Heart right ventricle (tissue), 16 donors: ENCODE measurements at regions of chr4 and their contacts with region 1.

Region 1: GRCh38 chr4:140085062-140085622 is 68.8 kb downstream of the MAML3 start:
- DNase-seq: no peak
- ATAC-seq: no peak
- H3K4me3 ChIP-seq: no peak overlapping the region
- H3K27ac ChIP-seq: peak overlapping the region in 1 of 10 donors; percentile 37
- H3K4me1 ChIP-seq: peaks cover 0 to 19% (median 4%) of the 10 kb centered on the region in 9 donors
- H3K27me3 ChIP-seq: no peaks in the 10 kb centered on the region
- CTCF ChIP-seq: no peak

Region 2: GRCh38 chr4:140018931-140019618 is 66.1 kb before region 1 on chr4:
- intact Hi-C with region 1: loop called in 1 of 10 experiments (anchors 2 kb)
- DNase-seq: no peak
- ATAC-seq: peak in 1 of 8 donors; percentile 21
- H3K4me3 ChIP-seq: no peak overlapping the region
- H3K27ac ChIP-seq: peak overlapping the region in 2 of 10 donors; percentile 3 to 10
- H3K4me1 ChIP-seq: peaks cover 0 to 28% (median 20%) of the 10 kb centered on the region in 9 donors
- H3K27me3 ChIP-seq: no peaks in the 10 kb centered on the region
- CTCF ChIP-seq: no peak

Region 3: DNA sequence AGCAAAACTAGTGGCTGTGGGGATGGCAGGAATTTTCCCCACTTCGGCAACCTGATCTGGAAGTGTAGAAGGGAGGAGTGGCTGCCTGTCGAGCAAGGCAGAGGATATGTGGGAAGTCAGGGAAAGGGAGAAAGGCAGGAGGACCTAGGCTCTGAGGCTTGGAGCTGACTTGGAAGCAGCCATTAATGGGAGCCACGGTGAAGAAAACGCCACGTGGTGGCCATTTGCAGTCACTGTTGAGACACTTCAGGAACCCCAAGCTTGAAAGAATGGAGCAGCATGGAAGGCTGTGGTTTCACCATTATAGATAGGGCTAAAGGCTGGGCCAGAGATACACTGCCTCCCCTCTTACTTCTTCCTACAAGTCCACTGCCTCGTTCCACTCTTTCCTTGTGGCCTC is 110.7 kb after region 1 on chr4:
- intact Hi-C with region 1: no loop called
- DNase-seq: no peak
- ATAC-seq: no peak
- H3K4me3 ChIP-seq: no peak overlapping the region
- H3K27ac ChIP-seq: no peak overlapping the region
- H3K4me1 ChIP-seq: no peaks in the 10 kb centered on the region
- H3K27me3 ChIP-seq: no peaks in the 10 kb centered on the region
- CTCF ChIP-seq: no peak

Region 4: DNA sequence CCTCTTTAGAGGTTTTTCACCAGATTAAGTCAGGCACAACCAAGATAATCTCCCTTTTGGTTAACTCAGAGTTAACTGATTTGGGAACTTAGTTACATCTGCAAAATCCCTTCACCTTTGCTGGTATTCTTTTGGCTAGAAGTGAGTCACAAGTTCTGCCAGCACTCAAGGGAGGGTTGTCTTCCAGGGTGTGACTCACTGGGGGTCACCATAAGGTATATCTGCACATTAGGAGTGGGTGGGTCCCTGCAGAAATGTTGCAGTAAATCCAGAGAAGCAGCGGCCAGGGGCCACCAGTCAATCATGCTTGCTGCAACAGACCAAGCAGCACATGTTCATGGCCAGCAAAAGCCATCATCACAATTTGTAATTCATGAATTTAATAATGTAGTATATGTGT is 128.6 kb after region 1 on chr4:
- intact Hi-C with region 1: no loop called
- DNase-seq: no peak
- ATAC-seq: no peak
- H3K4me3 ChIP-seq: no peak overlapping the region
- H3K27ac ChIP-seq: no peak overlapping the region
- H3K4me1 ChIP-seq: no peaks in the 10 kb centered on the region
- H3K27me3 ChIP-seq: no peaks in the 10 kb centered on the region
- CTCF ChIP-seq: no peak